Mammary epithelial cell (primary cell): ENCODE measurements at regions of chr18 and their contacts with region 1.

Region 1: GRCh38 chr18:21391074-21391673 is 149.1 kb downstream of the GREB1L start:
- DNase-seq: peak; percentile 97
- H3K4me3 ChIP-seq: no peak overlapping the region
- H3K27ac ChIP-seq: peak overlapping the region; percentile 82
- H3K4me1 ChIP-seq: peaks cover 21% of the 10 kb centered on the region
- H3K27me3 ChIP-seq: no peaks in the 10 kb centered on the region
- CTCF ChIP-seq: no peak

Region 2: GRCh38 chr18:21191596-21192307 is 199.4 kb before region 1 on chr18:
- CTCF ChIA-PET with region 1: no interaction called
- dilution Hi-C with region 1: no loop called
- in situ Hi-C with region 1: no loop called
- intact Hi-C with region 1: loop called (anchors 2 kb)
- DNase-seq: peak; percentile 34
- H3K4me3 ChIP-seq: no peak overlapping the region
- H3K27ac ChIP-seq: no peak overlapping the region
- H3K4me1 ChIP-seq: peaks cover 6% of the 10 kb centered on the region
- H3K27me3 ChIP-seq: no peaks in the 10 kb centered on the region
- CTCF ChIP-seq: peak; percentile 65 to 84

Region 3: GRCh38 chr18:21242141-21242779 is 148.9 kb before region 1 on chr18 and contains the start of gene GREB1L:
- CTCF ChIA-PET with region 1: no interaction called
- dilution Hi-C with region 1: no loop called
- in situ Hi-C with region 1: no loop called
- intact Hi-C with region 1: loop called (anchors 5 kb)
- DNase-seq: peak; percentile 76
- H3K4me3 ChIP-seq: peak within 1 kb of the TSS; percentile 64 to 67 (median 65)
- H3K27ac ChIP-seq: no peak within 1 kb of the TSS
- H3K4me1 ChIP-seq: peaks cover 6% of the 10 kb centered on the region
- H3K27me3 ChIP-seq: peaks cover 19% of the 10 kb centered on the region
- CTCF ChIP-seq: peak in 1 of 2 donors; percentile 33
- total RNA-seq, gene GREB1L: 1.7 to 2.0 TPM

Region 4: GRCh38 chr18:21439446-21439846 is 48.3 kb after region 1 on chr18:
- CTCF ChIA-PET with region 1: no interaction called
- dilution Hi-C with region 1: no loop called
- in situ Hi-C with region 1: loop called (anchors 5 to 10 kb)
- intact Hi-C with region 1: loop called (anchors 1 kb)
- DNase-seq: peak; percentile 93
- H3K4me3 ChIP-seq: no peak overlapping the region
- H3K27ac ChIP-seq: peak overlapping the region; percentile 75
- H3K4me1 ChIP-seq: peaks cover 6% of the 10 kb centered on the region
- H3K27me3 ChIP-seq: no peaks in the 10 kb centered on the region
- CTCF ChIP-seq: no peak

Region 5: DNA sequence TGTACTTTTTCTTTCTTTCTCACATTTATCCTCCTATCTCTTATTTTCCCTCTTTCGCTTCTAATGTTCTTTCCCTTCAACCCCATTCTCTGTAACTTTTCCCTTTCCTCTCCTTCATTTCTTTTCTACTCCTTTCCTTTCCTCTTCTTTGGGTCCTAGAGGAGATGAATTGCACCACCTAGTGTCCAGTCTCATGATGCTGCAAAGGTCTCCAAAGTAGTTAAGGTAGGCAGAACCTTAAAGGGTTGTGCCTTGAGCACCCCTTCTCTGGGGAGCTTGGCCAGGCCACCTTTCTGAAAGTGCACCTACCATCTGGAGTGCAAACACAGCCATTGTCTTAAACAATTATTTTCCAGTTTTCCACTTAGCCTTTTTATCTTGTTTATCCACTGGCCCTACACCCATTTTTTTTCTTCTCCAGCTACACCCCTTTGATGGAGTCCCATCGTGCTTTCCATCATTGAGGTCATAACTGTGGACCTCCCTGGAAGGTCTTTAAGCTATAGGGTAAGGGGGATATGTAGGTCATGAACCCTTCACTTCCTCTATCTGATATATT is 53.4 kb after region 1 on chr18:
- CTCF ChIA-PET with region 1: no interaction called
- dilution Hi-C with region 1: no loop called
- in situ Hi-C with region 1: loop called (anchors 5 to 10 kb)
- intact Hi-C with region 1: loop called (anchors 1 kb)
- DNase-seq: peak; percentile 48
- H3K4me3 ChIP-seq: no peak overlapping the region
- H3K27ac ChIP-seq: no peak overlapping the region
- H3K4me1 ChIP-seq: peaks cover 3% of the 10 kb centered on the region
- H3K27me3 ChIP-seq: no peaks in the 10 kb centered on the region
- CTCF ChIP-seq: peak; percentile 81 to 87

Region 6: DNA sequence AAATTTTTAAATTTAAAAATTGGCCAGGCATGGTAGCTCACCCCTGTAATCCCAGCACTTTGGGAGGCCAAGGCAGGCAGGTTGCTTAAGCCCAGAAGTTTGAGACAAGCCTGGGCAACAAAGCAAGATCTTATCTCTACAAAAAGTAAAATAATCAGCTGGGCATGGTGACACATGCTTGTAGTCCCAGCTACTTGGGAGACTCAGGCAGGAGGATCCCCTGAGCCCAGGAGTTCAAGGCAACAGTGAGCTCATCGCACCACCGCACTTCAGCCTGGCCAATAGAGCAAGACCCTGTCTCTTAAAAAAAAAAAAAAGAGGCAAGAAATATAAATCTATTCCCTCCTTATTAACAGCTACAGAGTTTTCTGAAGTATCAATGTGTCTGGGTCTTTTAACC is 157.5 kb after region 1 on chr18:
- CTCF ChIA-PET with region 1: no interaction called
- dilution Hi-C with region 1: no loop called
- in situ Hi-C with region 1: no loop called
- intact Hi-C with region 1: no loop called
- DNase-seq: peak; percentile 74
- H3K4me3 ChIP-seq: no peak overlapping the region
- H3K27ac ChIP-seq: no peak overlapping the region
- H3K4me1 ChIP-seq: no peaks in the 10 kb centered on the region
- H3K27me3 ChIP-seq: no peaks in the 10 kb centered on the region
- CTCF ChIP-seq: no peak

Region 7: DNA sequence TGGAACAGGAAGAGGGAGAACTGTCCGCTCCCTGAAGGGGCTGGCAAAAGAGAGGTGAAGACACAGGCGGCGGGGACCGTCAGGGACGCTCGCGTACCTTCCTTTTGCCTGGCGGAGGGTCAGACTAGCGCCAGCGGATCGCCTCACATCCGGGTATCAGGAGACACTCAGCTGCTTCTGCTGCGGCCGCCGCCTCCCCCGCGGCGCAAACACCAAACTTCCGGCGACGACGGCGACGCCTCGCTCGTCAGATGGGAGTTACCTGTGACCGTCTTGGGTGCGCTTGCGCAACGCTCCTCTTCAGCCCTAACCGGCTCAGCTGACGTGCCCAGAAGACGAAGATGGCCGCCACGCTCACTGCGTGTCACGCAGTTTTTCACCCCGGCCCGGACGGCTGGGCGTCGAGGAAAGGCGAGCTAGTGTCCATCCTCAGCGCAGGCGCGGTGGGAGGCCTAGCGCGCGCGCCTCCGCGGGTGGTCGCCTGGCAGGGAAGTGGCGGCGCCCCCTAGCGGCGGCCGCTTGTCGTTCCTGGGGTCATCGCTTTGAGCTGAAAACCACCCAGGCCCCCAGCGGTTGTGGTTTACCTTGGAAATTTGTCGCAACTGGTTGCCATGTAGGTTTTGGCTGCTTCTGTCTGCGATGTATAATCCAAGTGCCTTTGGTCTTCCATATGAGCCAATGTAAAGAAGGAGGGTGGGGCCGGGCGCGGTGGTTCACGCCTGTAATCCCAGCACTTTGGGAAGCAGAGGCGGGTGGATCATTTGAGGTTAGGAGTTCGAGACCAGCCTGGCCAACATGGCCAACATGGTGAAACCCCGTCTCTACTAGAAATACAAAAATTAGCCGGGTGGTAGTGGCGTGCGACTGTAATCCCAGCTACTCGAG is 209.6 kb after region 1 on chr18 and contains the start of gene ESCO1:
- CTCF ChIA-PET with region 1: no interaction called
- dilution Hi-C with region 1: no loop called
- in situ Hi-C with region 1: no loop called
- intact Hi-C with region 1: loop called (anchors 2 kb)
- DNase-seq: peak; percentile 99
- H3K4me3 ChIP-seq: peak within 1 kb of the TSS; percentile 62 to 99 (median 96)
- H3K27ac ChIP-seq: peak within 1 kb of the TSS; percentile 91
- H3K4me1 ChIP-seq: peaks cover 5% of the 10 kb centered on the region
- H3K27me3 ChIP-seq: no peaks in the 10 kb centered on the region
- CTCF ChIP-seq: peak; percentile 79 to 89
- total RNA-seq, gene ESCO1: 14.9 to 16.2 TPM